Naive thymus-derived CD4-positive, alpha-beta T cell (primary cell): ENCODE measurements at regions of chr16 and their contacts with region 1.

Region 1: DNA sequence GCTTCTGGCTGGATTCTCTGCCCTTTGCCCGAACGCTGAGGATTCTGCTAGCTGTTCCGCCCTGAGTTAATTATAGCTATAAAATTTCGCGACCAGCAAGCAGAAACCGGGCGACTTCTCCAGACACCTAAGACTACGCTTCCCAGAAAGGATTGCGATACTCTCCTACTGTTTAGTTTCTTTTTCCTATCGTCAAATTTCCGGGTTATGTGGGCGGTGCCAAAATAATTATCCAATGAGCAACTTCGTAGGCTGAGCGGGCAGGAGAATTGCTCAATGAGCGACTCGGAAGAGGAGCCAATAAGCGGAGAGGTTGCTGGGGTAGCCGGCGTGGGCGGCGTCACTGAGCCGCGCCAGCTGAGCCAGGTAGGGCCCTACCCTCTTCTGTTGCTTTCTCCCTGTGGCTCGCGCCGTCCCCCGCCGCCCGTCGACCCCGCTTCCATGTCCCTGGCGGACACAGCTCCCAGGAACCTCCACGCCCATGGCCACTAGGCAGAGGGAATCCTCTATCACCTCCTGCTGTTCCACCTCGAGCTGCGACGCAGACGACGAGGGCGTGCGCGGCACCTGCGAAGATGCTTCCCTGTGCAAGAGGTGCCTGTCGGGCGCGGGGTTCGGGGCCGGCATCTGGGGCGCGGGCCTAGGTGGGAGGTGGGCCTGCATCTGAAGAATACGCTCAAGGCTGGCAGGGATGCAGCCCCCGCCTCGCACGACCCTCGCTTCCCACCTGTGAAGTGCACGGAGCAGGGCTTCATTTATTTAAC is at the start of gene LCMT1:
- DNase-seq: peak; percentile 68 to 96 (median 94)
- ATAC-seq: peak; percentile 93
- H3K4me3 ChIP-seq: peak within 1 kb of the TSS; percentile 90
- H3K4me3 Mint-ChIP-seq: peak within 1 kb of the TSS; percentile 89 to 99 (median 92)
- H3K27ac ChIP-seq: peak within 1 kb of the TSS; percentile 70
- H3K27ac Mint-ChIP-seq: peak within 1 kb of the TSS; percentile 62 to 98 (median 89)
- H3K4me1 ChIP-seq: peaks cover 12 to 17% of the 10 kb centered on the region in 2 donors
- H3K4me1 Mint-ChIP-seq: peaks cover 44 to 80% (median 64%) of the 10 kb centered on the region in 7 donors
- H3K27me3 ChIP-seq: no peaks in the 10 kb centered on the region
- H3K27me3 Mint-ChIP-seq: no peaks in the 10 kb centered on the region
- total RNA-seq, gene LCMT1: 30.2 to 36.9 (median 33.0) TPM

Region 2: DNA sequence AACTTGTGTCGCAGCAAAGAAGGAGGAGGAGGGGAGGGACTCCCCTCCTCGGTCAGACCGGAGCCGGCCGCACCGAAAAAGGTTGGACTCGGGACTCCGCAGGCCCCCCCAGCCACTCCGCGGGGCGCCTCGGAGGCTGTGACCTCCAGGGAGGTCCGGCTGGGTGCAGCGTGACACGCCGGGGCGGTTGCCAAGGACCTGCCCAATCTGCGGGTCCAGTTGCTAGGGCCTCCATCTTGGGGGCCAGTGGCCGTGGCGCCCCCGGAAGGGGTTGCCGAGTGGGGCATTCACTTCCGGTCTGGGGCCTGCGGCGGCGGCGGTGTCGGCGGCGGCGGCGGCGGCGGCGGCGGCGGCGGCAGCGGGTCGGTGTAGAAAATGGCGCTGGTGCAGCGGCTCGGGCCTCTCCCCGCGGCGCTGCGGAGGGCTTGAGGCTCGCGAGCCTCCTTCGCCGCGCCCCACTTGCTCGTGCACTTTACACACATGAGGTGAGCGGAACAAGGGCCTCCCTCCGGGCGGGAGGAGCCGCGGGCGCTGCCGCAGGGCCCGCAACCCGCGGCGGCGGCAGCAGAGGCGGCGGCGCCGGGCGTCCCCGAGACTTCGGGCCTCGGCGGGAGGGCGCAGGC is 382.1 kb before region 1 on chr16 and contains the start of gene TNRC6A:
- CTCF ChIA-PET with region 1: no interaction called
- POLR2A ChIA-PET with region 1: no interaction called
- intact Hi-C with region 1: loop called in 1 of 2 experiments (anchors 10 kb)
- DNase-seq: peak; percentile 68 to 86 (median 78)
- ATAC-seq: peak; percentile 88
- H3K4me3 ChIP-seq: peak within 1 kb of the TSS; percentile 90
- H3K4me3 Mint-ChIP-seq: peak within 1 kb of the TSS; percentile 89 to 100 (median 96)
- H3K27ac ChIP-seq: peak within 1 kb of the TSS; percentile 98
- H3K27ac Mint-ChIP-seq: peak within 1 kb of the TSS; percentile 93 to 100 (median 98)
- H3K4me1 ChIP-seq: peaks cover 17 to 20% of the 10 kb centered on the region in 2 donors
- H3K4me1 Mint-ChIP-seq: peaks cover 30 to 55% (median 45%) of the 10 kb centered on the region in 7 donors
- H3K27me3 ChIP-seq: no peaks in the 10 kb centered on the region
- H3K27me3 Mint-ChIP-seq: peaks cover 0 to 6% (median 0%) of the 10 kb centered on the region in 5 donors
- total RNA-seq, gene TNRC6A: 46.9 to 110 (median 77.8) TPM

Region 3: GRCh38 chr16:24883714-24884151 is 227.9 kb before region 1 on chr16:
- CTCF ChIA-PET with region 1: no interaction called
- POLR2A ChIA-PET with region 1: no interaction called
- intact Hi-C with region 1: no loop called
- DNase-seq: no peak
- ATAC-seq: no peak
- H3K4me3 ChIP-seq: no peak overlapping the region
- H3K4me3 Mint-ChIP-seq: no peak overlapping the region
- H3K27ac ChIP-seq: no peak overlapping the region
- H3K27ac Mint-ChIP-seq: no peak overlapping the region
- H3K4me1 ChIP-seq: no peaks in the 10 kb centered on the region
- H3K4me1 Mint-ChIP-seq: no peaks in the 10 kb centered on the region
- H3K27me3 ChIP-seq: no peaks in the 10 kb centered on the region
- H3K27me3 Mint-ChIP-seq: peaks cover 0 to 6% (median 0%) of the 10 kb centered on the region in 5 donors

Region 4: GRCh38 chr16:24972608-24973220 is 138.9 kb before region 1 on chr16:
- CTCF ChIA-PET with region 1: no interaction called
- POLR2A ChIA-PET with region 1: no interaction called
- intact Hi-C with region 1: loop called in 1 of 2 experiments (anchors 5 kb)
- DNase-seq: no peak
- ATAC-seq: no peak
- H3K4me3 ChIP-seq: no peak overlapping the region
- H3K4me3 Mint-ChIP-seq: peak overlapping the region in 1 of 10 donors; percentile 51
- H3K27ac ChIP-seq: no peak overlapping the region
- H3K27ac Mint-ChIP-seq: peak overlapping the region in 6 of 9 donors; percentile 0 to 74 (median 30)
- H3K4me1 ChIP-seq: peaks cover 0 to 12% of the 10 kb centered on the region in 2 donors
- H3K4me1 Mint-ChIP-seq: peaks cover 24 to 52% (median 33%) of the 10 kb centered on the region in 7 donors
- H3K27me3 ChIP-seq: no peaks in the 10 kb centered on the region
- H3K27me3 Mint-ChIP-seq: no peaks in the 10 kb centered on the region

Region 5: DNA sequence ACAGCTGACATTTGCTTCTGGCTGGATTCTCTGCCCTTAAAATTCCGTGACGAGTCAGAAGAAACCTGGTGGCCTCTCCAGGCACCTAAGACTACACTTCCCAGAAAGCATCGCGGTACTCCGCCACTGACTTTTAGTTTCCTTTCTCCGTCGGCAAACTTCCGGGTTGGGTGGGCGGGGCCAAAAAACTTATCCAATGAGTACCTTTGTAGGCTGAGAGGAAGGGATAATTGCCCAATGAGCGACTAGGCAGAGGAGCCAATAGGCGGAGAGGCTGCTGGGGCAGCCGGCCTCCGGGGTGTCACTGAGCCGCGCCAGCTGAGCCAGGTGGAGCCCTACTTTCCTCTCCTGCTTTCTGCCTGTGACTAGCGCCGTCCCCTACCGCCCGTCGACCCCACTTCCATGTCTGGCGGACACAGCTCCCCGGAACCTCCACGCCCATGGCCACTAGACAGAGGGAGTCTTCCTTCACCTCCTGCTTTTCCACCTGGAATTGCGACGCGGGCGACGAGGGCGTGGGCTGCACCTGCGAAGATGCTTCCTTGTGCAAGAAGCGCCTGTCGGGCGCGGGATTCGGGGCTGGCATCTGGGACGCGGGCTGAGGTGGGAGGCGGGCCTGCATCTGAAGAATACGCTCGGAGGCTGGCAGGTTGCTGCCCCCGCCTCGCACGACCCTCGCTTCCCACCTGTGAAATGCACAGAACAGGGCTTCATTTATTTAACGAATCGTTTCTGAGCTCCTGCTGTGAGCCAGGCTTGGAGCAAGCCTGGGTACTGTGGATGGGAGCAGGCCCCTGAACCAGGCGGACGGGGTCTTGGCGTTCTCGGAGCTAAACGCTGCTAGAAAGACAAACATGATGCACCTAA is 79.9 kb before region 1 on chr16:
- CTCF ChIA-PET with region 1: interaction called, 3 read pairs
- POLR2A ChIA-PET with region 1: interaction called, 18 read pairs
- intact Hi-C with region 1: loop called (anchors 1 kb)
- DNase-seq: peak; percentile 70 to 95 (median 93)
- ATAC-seq: peak; percentile 100
- H3K4me3 ChIP-seq: peak overlapping the region; percentile 86
- H3K4me3 Mint-ChIP-seq: peak overlapping the region; percentile 84 to 99 (median 96)
- H3K27ac ChIP-seq: peak overlapping the region; percentile 76
- H3K27ac Mint-ChIP-seq: peak overlapping the region; percentile 81 to 98 (median 95)
- H3K4me1 ChIP-seq: peaks cover 13 to 20% of the 10 kb centered on the region in 2 donors
- H3K4me1 Mint-ChIP-seq: peaks cover 24 to 59% (median 36%) of the 10 kb centered on the region in 7 donors
- H3K27me3 ChIP-seq: no peaks in the 10 kb centered on the region
- H3K27me3 Mint-ChIP-seq: no peaks in the 10 kb centered on the region

Region 6: GRCh38 chr16:25060920-25061319 is 50.7 kb before region 1 on chr16:
- CTCF ChIA-PET with region 1: interaction called, 118 read pairs
- POLR2A ChIA-PET with region 1: interaction called, 157 read pairs
- intact Hi-C with region 1: loop called (anchors 1 kb)
- DNase-seq: peak in 7 of 9 donors; percentile 52 to 85 (median 80)
- ATAC-seq: peak; percentile 98
- H3K4me3 ChIP-seq: peak overlapping the region; percentile 19
- H3K4me3 Mint-ChIP-seq: peak overlapping the region; percentile 67 to 89 (median 80)
- H3K27ac ChIP-seq: peak overlapping the region; percentile 71
- H3K27ac Mint-ChIP-seq: peak overlapping the region; percentile 90 to 100 (median 97)
- H3K4me1 ChIP-seq: peaks cover 22 to 45% of the 10 kb centered on the region in 2 donors
- H3K4me1 Mint-ChIP-seq: peaks cover 44 to 75% (median 66%) of the 10 kb centered on the region in 7 donors
- H3K27me3 ChIP-seq: no peaks in the 10 kb centered on the region
- H3K27me3 Mint-ChIP-seq: no peaks in the 10 kb centered on the region

Region 7: GRCh38 chr16:25093208-25094061 is 18.1 kb before region 1 on chr16:
- CTCF ChIA-PET with region 1: interaction called, 3 read pairs
- POLR2A ChIA-PET with region 1: interaction called, 23 read pairs
- intact Hi-C with region 1: loop called (anchors 1 kb)
- DNase-seq: peak in 5 of 9 donors; percentile 15 to 49 (median 37)
- ATAC-seq: peak; percentile 68
- H3K4me3 ChIP-seq: no peak overlapping the region
- H3K4me3 Mint-ChIP-seq: peak overlapping the region; percentile 1 to 83 (median 62)
- H3K27ac ChIP-seq: peak overlapping the region; percentile 69
- H3K27ac Mint-ChIP-seq: peak overlapping the region; percentile 82 to 98 (median 92)
- H3K4me1 ChIP-seq: peaks cover 0 to 20% of the 10 kb centered on the region in 2 donors
- H3K4me1 Mint-ChIP-seq: peaks cover 21 to 44% (median 39%) of the 10 kb centered on the region in 7 donors
- H3K27me3 ChIP-seq: no peaks in the 10 kb centered on the region
- H3K27me3 Mint-ChIP-seq: no peaks in the 10 kb centered on the region

Region 8: GRCh38 chr16:25279491-25279890 is 167.9 kb after region 1 on chr16:
- CTCF ChIA-PET with region 1: no interaction called
- POLR2A ChIA-PET with region 1: no interaction called
- intact Hi-C with region 1: no loop called
- DNase-seq: no peak
- ATAC-seq: no peak
- H3K4me3 ChIP-seq: no peak overlapping the region
- H3K4me3 Mint-ChIP-seq: no peak overlapping the region
- H3K27ac ChIP-seq: no peak overlapping the region
- H3K27ac Mint-ChIP-seq: no peak overlapping the region
- H3K4me1 ChIP-seq: no peaks in the 10 kb centered on the region
- H3K4me1 Mint-ChIP-seq: peaks cover 0 to 9% (median 3%) of the 10 kb centered on the region in 7 donors
- H3K27me3 ChIP-seq: no peaks in the 10 kb centered on the region
- H3K27me3 Mint-ChIP-seq: peaks cover 0 to 8% (median 0%) of the 10 kb centered on the region in 5 donors

Region 9: DNA sequence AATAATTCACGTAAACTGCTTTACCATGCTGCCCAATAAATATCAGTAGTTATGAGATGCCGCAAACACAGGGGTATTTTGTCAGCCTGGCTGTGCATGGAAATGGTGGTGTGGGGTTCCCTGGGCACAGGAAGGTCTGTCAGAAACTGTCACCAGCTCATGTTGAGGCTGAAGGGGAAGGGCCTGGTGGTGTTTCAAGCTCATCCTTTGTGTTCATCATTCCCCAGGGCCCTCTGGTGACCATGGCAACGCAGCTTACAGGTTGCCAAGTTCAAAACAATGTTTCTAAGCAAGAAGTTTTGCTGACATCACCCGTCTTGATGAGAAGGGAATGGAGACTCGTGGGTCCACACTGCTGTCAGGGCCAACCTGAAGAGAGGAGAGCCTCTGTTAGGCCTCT is 1606.2 kb after region 1 on chr16:
- CTCF ChIA-PET with region 1: no interaction called
- POLR2A ChIA-PET with region 1: no interaction called
- intact Hi-C with region 1: no loop called
- DNase-seq: no peak
- ATAC-seq: no peak
- H3K4me3 ChIP-seq: no peak overlapping the region
- H3K4me3 Mint-ChIP-seq: no peak overlapping the region
- H3K27ac ChIP-seq: no peak overlapping the region
- H3K27ac Mint-ChIP-seq: peak overlapping the region in 1 of 9 donors; percentile 21
- H3K4me1 ChIP-seq: no peaks in the 10 kb centered on the region
- H3K4me1 Mint-ChIP-seq: no peaks in the 10 kb centered on the region
- H3K27me3 ChIP-seq: no peaks in the 10 kb centered on the region
- H3K27me3 Mint-ChIP-seq: peaks cover 0 to 5% (median 1%) of the 10 kb centered on the region in 5 donors